ENCODE measurements at regions of chr11 and their contacts with region 1.

Region 1: DNA sequence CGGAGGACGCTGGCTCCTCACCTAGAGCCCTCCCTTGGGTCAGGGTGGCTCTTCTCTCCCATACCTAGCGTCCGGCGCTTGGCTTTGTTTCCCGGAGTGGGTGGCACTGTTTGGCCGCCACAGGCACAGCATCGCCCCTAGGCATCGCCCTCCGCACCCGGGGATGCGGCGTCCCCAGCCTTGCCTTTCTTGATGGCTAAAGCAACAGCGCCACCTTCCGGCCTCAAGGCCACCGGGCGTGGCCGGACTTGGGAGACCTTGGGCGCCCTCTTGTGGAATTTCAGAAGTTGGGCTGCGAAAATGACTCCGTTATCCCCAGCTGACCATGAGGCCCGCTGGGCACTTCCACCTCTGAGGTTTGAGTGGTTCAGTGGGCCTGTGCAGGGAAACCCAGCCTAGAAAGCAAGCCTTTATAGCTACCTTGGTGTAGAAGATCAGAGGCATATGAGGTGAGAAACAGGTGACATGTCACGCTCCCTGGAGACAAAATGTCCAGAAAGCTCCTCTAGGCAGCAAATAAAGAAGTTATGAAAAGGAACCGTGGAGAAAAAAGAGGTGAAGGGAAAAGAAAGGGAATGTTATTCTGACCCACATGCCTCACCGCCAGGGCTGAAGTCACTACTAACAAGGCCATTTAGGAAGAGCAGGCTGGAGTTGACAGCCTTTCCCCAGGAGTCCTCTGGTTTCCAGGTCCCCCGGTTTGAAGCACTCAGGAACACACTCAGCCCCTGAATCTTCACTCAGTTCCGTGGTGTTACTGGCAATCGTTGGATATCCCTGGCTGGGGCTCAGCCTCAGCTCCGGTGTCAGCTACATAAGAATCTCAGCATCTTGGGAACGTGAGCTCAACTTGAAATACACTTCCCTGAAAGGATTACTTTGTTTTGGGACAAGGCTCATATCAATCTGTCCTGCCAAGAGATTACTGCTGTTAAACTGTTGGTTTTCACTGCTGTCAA is 54.1 kb downstream of the SNX19 start:
- DNase-seq: peak; percentile 92
- H3K4me3 Mint-ChIP-seq: no peak overlapping the region
- H3K27ac Mint-ChIP-seq: peak overlapping the region; percentile 38
- H3K4me1 Mint-ChIP-seq: no peaks in the 10 kb centered on the region
- H3K27me3 Mint-ChIP-seq: no peaks in the 10 kb centered on the region

Region 2: DNA sequence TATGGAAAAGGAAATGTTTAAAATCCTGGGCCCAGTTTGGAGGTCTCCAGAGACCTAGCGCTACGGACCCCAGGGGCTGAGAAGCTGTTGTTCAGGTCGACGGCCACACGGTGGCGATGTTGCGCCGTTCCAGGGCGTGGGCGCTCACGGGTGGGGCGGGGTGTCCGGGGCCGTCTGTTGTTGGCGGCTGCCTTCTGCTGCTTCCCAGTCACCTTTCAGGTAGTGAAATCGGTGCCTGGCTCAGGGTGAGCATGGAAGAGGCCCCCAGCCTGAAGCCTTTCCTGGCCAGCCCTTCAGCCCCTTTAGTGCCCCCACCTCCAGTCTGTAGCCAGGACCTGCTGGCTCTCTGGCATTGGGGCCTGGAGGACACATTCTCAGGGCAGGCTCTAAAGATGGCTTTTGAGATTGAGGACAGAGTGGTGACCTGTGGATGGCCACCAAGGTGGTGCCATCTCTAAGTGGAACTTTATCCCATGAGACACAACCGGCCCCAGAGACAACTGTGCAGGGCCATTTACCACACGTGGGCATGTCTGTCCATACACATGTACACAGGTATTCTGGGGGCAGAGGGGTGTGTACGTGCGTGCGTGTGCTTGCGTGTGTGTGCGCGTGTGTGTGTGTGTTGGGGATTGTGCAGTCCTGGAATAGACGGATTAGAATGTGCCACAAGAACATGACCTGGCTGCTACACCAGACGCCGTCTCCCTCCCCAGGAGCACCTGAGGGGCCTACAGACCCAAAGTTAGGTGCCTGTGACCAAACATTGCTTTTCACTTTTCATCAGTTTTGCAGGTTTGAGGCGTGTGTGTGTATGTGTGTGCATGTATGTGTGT is 648.8 kb before region 1 on chr11:
- CTCF ChIA-PET with region 1: interaction called, 22 read pairs
- DNase-seq: peak; percentile 75
- H3K4me3 Mint-ChIP-seq: no peak overlapping the region
- H3K27ac Mint-ChIP-seq: no peak overlapping the region
- H3K4me1 Mint-ChIP-seq: peaks cover 2% of the 10 kb centered on the region
- H3K27me3 Mint-ChIP-seq: peaks cover 26% of the 10 kb centered on the region

Region 3: DNA sequence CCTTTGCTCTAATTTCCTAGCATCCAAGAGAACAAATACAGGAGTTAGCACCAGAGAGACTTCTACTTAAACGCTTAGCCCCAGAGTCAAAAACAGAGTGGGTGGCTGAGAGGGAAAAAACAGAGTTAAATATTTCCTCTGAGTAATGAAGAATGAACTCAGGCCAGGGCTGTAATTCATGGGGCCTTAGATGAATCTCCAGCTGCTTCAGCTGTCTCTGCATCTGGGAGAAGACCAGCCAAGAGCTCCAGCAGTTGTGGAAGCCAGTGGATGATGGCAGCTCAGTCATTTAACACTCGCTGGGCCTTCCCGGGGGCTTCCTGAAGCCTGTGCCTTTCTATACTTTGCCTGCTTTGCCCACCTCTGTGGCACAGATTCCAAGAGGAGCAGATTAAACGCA is 419.4 kb before region 1 on chr11:
- CTCF ChIA-PET with region 1: interaction called, 270 read pairs
- DNase-seq: no peak
- H3K4me3 Mint-ChIP-seq: no peak overlapping the region
- H3K27ac Mint-ChIP-seq: no peak overlapping the region
- H3K4me1 Mint-ChIP-seq: peaks cover 21% of the 10 kb centered on the region
- H3K27me3 Mint-ChIP-seq: peaks cover 60% of the 10 kb centered on the region

Region 4: DNA sequence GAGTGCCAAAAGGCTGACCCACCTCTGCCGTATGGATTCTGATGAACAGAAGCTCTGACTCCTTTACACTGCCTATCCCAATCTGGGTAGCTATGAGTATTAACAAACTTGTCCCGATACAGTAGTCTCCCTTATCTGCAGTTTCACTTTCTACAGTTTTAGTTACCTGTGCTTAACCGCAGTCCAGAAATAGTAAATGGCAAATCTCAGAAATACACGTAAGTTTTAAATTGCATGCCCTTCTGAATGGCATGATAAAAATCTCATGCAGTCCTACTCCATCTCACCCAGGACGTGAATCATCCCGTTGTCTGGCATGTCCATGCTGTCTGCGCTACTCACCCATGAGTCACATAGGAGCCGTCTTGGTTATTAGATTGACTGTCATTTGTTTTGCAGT is 14.7 kb before region 1 on chr11:
- CTCF ChIA-PET with region 1: interaction called, 31 read pairs
- DNase-seq: no peak
- H3K4me3 Mint-ChIP-seq: no peak overlapping the region
- H3K27ac Mint-ChIP-seq: no peak overlapping the region
- H3K4me1 Mint-ChIP-seq: no peaks in the 10 kb centered on the region
- H3K27me3 Mint-ChIP-seq: peaks cover 22% of the 10 kb centered on the region

Region 5: DNA sequence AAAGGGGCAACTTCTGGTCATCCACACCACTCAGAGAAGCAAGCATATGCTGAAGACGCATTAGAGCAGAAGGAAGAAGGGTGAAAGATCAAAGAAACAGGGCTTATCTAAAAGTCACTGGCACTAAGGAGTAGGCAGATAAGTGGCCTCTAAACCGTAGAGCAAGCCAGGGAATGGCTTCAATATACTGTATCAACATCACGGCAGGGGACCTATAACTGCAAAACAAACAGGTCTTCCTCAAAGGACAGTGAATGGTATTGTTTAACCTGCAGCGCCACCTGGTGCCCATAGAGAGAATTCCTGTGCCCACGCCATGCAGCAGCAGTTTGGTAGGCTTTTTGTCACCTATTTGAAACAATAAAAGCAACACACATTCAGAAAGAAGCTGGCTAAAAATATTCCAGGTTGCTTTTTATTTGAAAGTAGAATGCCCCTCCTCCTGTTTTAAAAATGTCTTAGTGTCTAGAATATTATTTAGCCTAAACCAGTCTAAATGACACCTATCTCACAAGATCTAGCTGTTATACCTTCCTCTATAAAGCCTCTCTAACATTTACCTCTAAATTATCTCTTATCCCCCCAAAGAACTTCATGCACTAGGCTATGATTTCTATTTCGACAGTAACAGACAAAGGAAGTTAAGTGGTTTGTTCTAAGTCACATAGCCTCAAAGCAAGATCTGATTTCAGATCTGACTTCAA is 32.3 kb after region 1 on chr11:
- CTCF ChIA-PET with region 1: interaction called, 39 read pairs
- DNase-seq: peak; percentile 79
- H3K4me3 Mint-ChIP-seq: no peak overlapping the region
- H3K27ac Mint-ChIP-seq: no peak overlapping the region
- H3K4me1 Mint-ChIP-seq: no peaks in the 10 kb centered on the region
- H3K27me3 Mint-ChIP-seq: no peaks in the 10 kb centered on the region